Ovary (tissue), 10 donors: ENCODE measurements at regions of chr1 and their contacts with region 1.

Region 1: DNA sequence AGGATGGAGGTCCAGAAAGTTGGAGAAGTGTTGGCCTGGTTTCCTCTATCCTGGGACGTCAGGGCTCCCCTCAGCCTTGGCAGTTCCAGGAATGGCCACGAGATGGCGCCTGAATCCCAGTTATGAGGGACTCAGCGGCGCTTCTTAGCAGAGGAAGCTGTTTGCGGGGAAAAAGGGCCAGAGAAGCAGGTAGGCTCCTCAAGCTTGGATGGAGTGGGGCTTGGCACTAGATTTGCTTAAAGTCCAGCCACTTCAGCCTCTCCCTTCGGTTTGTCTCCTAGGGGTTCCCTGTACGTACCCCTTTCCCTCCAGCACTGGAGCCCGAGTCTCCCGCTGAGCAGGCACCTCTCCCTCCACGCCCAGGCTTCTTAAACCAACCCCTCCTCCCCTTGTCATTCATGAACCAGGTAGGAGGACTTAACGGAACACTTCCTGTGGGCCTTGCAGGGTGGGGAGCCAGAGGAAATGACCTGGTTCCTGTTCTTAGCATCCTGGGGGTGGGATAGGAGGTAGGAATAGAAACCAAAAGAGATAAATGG is 32.0 kb upstream of the TENT5B start:
- DNase-seq: peak; percentile 81 to 93 (median 89)
- H3K4me3 ChIP-seq: no peak overlapping the region
- H3K27ac ChIP-seq: no peak overlapping the region
- H3K4me1 ChIP-seq: no peaks in the 10 kb centered on the region
- H3K27me3 ChIP-seq: no peaks in the 10 kb centered on the region
- CTCF ChIP-seq: peak; percentile 85 to 91 (median 86)
- EP300 ChIP-seq: no peak
- POLR2A ChIP-seq: no peak

Region 2: GRCh38 chr1:26932531-26932930 is 112.2 kb before region 1 on chr1:
- intact Hi-C with region 1: no loop called
- DNase-seq: no peak
- H3K4me3 ChIP-seq: no peak overlapping the region
- H3K27ac ChIP-seq: no peak overlapping the region
- H3K4me1 ChIP-seq: no peaks in the 10 kb centered on the region
- H3K27me3 ChIP-seq: no peaks in the 10 kb centered on the region
- CTCF ChIP-seq: no peak
- EP300 ChIP-seq: no peak
- POLR2A ChIP-seq: no peak

Region 3: DNA sequence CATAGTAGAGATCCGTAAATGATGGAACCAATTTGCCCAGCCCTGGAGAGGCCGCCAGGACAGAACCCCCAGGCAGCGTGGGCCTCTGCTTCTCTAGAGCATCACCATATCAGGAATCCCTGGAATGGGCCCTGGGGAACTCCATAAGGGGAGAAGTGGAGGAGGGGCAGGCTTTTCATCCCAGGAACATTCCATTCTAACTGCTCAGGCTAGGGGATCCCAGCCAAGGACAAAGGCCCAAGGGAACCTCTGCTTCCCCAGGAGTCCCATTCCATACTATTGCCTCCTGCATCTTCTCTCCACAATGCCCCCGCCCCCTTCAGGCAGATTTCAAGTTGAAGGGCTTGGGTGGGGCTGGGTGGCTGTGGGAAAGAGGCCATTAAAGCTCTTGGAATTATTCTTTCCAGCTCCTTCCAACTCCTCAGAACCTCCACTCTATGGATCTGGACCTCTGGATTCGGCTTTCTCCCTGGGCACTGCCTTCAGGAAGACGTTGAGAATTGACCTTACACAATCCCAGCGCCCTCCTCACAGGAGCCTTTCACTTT is 45.2 kb before region 1 on chr1:
- intact Hi-C with region 1: loop called in 2 of 4 experiments (anchors 5 kb)
- DNase-seq: peak; percentile 41 to 80 (median 76)
- H3K4me3 ChIP-seq: no peak overlapping the region
- H3K27ac ChIP-seq: no peak overlapping the region
- H3K4me1 ChIP-seq: peaks cover 14% of the 10 kb centered on the region
- H3K27me3 ChIP-seq: no peaks in the 10 kb centered on the region
- CTCF ChIP-seq: no peak
- EP300 ChIP-seq: peak; percentile 55
- POLR2A ChIP-seq: no peak

Region 4: GRCh38 chr1:27097484-27097917 is 52.8 kb after region 1 on chr1:
- intact Hi-C with region 1: loop called (anchors 2 kb)
- DNase-seq: peak; percentile 72 to 87 (median 83)
- H3K4me3 ChIP-seq: no peak overlapping the region
- H3K27ac ChIP-seq: no peak overlapping the region
- H3K4me1 ChIP-seq: peaks cover 4% of the 10 kb centered on the region
- H3K27me3 ChIP-seq: no peaks in the 10 kb centered on the region
- CTCF ChIP-seq: peak; percentile 76 to 95 (median 95)
- EP300 ChIP-seq: no peak
- POLR2A ChIP-seq: no peak

Region 5: DNA sequence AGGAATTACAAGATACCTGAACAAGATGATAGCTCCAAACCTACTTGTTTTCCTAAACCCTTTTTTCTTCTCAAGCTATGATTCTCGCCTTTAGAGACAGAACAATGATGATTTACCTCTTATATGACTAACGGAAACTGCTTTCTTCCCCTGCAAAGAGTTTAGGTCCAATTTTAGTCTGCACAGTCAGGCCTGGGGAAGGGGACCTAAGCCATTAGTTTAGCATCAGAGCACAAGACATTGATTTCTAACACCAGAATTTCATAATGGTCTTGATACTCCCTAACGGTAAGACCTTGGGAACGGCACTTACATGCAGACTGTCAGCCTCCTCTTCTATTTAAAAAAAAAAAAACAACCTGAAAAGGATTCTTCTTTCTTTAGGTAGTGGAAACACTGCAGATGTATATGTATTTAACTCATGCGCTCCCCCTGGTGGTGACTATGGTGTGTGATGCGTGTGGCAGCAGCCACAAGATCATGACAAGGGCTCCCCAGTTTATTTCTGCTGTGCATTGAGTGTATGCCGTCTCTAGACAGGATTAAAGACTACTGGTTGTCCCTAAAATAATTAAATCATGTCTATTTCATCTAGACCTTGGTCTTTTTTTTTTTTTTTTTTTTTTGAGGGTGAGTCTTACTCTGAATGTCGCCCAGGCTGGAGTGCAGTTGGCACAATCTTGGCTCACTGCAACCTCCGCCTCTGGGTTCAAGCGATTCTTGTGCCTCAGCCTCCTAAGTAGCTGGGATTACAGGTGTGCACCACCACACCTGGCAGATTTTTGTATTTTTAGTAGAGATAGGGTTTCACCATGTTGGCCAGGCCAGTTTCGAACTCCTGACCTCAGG is 240.0 kb after region 1 on chr1:
- intact Hi-C with region 1: loop called (anchors 1 to 10 kb)
- DNase-seq: peak; percentile 77 to 88 (median 84)
- H3K4me3 ChIP-seq: no peak overlapping the region
- H3K27ac ChIP-seq: no peak overlapping the region
- H3K4me1 ChIP-seq: no peaks in the 10 kb centered on the region
- H3K27me3 ChIP-seq: no peaks in the 10 kb centered on the region
- CTCF ChIP-seq: peak; percentile 62 to 71 (median 63)
- EP300 ChIP-seq: no peak
- POLR2A ChIP-seq: no peak